PC-9 (cell line): ENCODE measurements at regions of chr11 and their contacts with region 1.

Region 1: DNA sequence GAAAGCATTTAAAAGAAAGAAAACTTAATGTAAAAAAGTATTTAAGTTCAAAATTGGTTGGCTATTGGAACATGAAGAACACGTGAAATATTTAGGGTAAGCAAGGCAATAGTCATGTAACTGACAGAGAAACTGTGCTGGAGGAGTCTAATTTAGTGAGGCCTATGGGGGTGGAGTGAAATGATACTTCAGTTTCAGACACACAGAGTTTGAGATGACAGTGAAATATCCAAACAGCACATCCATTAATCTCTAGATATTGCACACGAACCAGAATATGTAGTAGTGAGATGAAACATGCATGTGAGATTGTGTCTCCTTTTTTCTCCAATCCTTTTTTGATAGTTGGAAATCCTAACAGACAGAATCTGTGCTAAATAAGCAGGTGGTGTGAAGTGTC is 739.0 kb downstream of the CNTN5 start:
- DNase-seq: no peak
- H3K4me3 ChIP-seq: no peak overlapping the region
- H3K27ac ChIP-seq: no peak overlapping the region
- H3K4me1 ChIP-seq: no peaks in the 10 kb centered on the region
- H3K27me3 ChIP-seq: no peaks in the 10 kb centered on the region
- CTCF ChIP-seq: no peak

Region 2: DNA sequence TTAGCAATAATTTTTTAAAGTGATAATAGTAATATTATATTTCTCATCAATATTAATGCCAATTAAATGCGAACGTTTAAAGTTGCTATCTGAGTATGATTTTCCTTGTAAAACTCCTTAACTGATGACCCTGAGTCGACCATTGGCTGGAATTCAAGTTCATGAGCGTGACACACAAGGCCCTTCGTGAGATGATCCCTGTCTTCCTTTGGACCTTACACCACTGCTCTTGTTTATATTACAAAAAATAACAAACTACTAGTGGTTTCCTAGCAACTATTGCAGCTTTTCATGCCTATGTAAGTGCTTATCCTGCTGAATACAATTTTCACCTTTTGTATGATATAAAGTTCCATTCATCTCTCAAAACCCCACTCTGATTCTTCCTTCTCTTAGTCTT is 13.9 kb after region 1 on chr11:
- CTCF ChIA-PET with region 1: no interaction called
- POLR2A ChIA-PET with region 1: no interaction called
- intact Hi-C with region 1: no loop called
- DNase-seq: no peak
- H3K4me3 ChIP-seq: no peak overlapping the region
- H3K27ac ChIP-seq: no peak overlapping the region
- H3K4me1 ChIP-seq: no peaks in the 10 kb centered on the region
- H3K27me3 ChIP-seq: no peaks in the 10 kb centered on the region
- CTCF ChIP-seq: no peak

Region 3: DNA sequence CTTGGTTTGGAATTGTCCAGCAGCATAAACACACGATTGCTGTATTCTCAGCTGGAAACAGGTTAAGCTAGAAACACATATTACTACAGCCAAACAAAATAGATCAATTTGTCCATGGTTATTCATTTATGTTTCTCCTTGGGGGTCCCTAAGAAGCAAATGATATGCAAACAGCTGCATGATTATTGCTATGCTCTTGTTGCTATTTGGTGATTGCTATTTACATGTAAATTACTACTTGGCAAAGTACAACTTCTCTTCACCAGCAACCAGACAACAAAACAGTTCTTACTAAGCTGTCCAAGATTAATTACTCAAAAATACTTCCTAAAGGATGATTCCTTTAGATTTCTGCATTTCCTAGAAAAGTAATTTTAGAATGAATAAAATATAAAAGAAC is 359.4 kb after region 1 on chr11:
- CTCF ChIA-PET with region 1: no interaction called
- POLR2A ChIA-PET with region 1: no interaction called
- intact Hi-C with region 1: loop called (anchors 5 kb)
- DNase-seq: no peak
- H3K4me3 ChIP-seq: no peak overlapping the region
- H3K27ac ChIP-seq: no peak overlapping the region
- H3K4me1 ChIP-seq: no peaks in the 10 kb centered on the region
- H3K27me3 ChIP-seq: no peaks in the 10 kb centered on the region
- CTCF ChIP-seq: no peak

Region 4: GRCh38 chr11:100434814-100435641 is 675.2 kb after region 1 on chr11:
- CTCF ChIA-PET with region 1: no interaction called
- POLR2A ChIA-PET with region 1: interaction called, 15 read pairs
- intact Hi-C with region 1: no loop called
- DNase-seq: no peak
- H3K4me3 ChIP-seq: no peak overlapping the region
- H3K27ac ChIP-seq: no peak overlapping the region
- H3K4me1 ChIP-seq: no peaks in the 10 kb centered on the region
- H3K27me3 ChIP-seq: no peaks in the 10 kb centered on the region
- CTCF ChIP-seq: no peak